Activated T-helper 2 cell treated with anti-CD3 and anti-CD28 coated beads, Interferon-gamma antibody, Interleukin-2, Interleukin-4, amounts not matched to agents 10 μg/mL and 5 μg/mL and 100 μg/mL, durations not matched to agents 14 hours and 24 hours and 36 hours (primary cell): ENCODE measurements at regions of chr2 and their contacts with region 1.

Region 1: GRCh38 chr2:11743846-11744553 is 2.4 kb upstream of the LPIN1 start:
- DNase-seq: peak; percentile 69
- H3K4me3 Mint-ChIP-seq: peak overlapping the region; percentile 22
- H3K27ac Mint-ChIP-seq: peak overlapping the region; percentile 70
- H3K4me1 Mint-ChIP-seq: peaks cover 56% of the 10 kb centered on the region
- H3K27me3 Mint-ChIP-seq: no peaks in the 10 kb centered on the region

Region 2: DNA sequence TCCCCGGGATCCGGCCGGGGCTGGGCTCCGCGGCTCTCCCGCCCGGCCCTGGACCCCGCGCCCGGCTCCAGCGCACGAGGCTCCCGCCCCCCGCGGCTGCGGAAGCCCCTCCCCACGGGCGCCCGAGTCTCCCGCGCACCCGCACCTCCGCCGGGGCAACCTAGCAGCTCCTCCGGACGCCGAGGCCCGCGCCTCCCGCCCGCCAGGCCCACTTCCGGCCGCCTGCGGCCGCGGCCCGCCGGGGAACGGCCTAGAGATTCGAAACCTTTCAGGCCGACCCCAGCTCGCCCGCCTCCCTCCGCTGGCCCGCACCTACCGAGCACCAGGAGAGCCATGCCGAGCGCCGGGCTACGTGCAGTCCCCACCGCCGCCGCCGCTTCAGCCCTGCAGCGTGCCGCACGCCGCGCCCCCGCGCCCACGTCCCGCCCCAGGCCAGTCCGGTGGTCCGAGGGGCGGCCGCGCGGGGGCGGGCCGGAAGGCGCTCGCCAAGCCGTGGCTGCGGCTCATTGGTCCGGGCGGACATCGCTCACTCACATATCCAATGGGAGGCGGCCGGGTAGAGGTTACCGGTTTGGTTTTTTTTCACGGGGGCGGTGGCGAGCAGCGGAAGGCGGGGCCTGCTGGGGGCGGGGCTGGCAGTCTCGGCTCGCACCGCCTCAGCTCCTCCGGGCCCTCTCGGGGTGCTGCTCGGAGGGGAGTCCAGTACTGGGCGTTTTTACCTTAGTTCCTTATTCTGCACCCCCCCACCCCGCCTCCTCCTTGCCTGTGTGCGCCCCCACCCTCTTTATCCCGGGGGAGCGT is 931.4 kb before region 1 on chr2 and contains the start of gene PDIA6:
- intact Hi-C with region 1: loop called (anchors 10 kb)
- DNase-seq: peak; percentile 95
- H3K4me3 Mint-ChIP-seq: peak within 1 kb of the TSS; percentile 89
- H3K27ac Mint-ChIP-seq: peak within 1 kb of the TSS; percentile 92
- H3K4me1 Mint-ChIP-seq: peaks cover 33% of the 10 kb centered on the region
- H3K27me3 Mint-ChIP-seq: peaks cover 18% of the 10 kb centered on the region
- total RNA-seq, gene PDIA6: 210 and 211 TPM in 2 replicates

Region 3: GRCh38 chr2:11154923-11155380 is 589.0 kb before region 1 on chr2:
- intact Hi-C with region 1: loop called (anchors 1 kb)
- DNase-seq: peak; percentile 94
- H3K4me3 Mint-ChIP-seq: peak overlapping the region; percentile 83
- H3K27ac Mint-ChIP-seq: peak overlapping the region; percentile 75
- H3K4me1 Mint-ChIP-seq: peaks cover 9% of the 10 kb centered on the region
- H3K27me3 Mint-ChIP-seq: peaks cover 13% of the 10 kb centered on the region

Region 4: DNA sequence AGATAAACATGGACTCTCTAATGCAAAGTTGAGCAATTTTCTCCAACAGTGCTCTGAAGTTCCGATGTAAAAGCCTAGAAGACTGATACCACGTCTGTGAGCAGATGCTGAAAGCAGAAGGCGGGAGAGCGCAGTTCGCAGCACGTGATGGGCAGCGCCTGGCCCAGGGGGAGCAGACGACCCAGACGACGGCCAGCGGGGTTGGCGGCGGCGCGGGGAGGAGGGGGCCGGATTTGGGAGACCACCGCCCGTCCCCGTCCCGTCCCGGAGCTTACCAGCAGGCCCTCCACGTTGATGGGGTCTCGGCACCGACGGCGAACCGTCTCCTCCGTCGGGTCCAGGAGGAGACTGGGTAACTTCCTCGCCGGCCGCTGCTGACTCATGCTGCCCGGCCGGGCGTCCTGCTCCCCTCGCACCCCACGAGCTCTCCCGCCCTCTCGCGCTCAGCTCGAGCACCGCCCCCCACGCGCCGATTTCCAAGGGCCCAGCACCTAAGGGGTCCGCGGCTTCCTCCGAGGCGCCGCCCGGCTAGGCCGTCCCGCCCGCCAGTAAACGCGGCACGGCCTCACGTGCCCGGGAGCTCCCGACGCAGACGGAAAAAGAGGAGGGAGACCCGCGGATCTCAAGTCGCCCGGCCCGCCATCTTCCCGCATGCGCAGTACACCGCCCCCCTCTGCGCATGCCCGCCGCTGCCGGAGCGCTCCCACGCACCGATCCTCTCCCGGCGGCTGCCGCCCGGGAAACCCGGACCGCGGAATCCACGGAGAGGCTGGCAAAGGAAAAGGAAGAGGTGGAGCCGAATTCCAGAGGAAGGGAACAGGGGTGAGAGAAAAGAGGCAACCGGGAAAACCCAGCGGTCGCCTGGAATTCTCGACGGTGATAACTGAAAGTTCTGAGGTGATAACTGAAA is 278.2 kb before region 1 on chr2 and contains the start of gene E2F6:
- intact Hi-C with region 1: loop called (anchors 10 kb)
- DNase-seq: peak; percentile 80
- H3K4me3 Mint-ChIP-seq: peak within 1 kb of the TSS; percentile 96
- H3K27ac Mint-ChIP-seq: peak within 1 kb of the TSS; percentile 86
- H3K4me1 Mint-ChIP-seq: peaks cover 20% of the 10 kb centered on the region
- H3K27me3 Mint-ChIP-seq: no peaks in the 10 kb centered on the region
- total RNA-seq, gene E2F6: 16.8 and 18.2 TPM in 2 replicates

Region 5: DNA sequence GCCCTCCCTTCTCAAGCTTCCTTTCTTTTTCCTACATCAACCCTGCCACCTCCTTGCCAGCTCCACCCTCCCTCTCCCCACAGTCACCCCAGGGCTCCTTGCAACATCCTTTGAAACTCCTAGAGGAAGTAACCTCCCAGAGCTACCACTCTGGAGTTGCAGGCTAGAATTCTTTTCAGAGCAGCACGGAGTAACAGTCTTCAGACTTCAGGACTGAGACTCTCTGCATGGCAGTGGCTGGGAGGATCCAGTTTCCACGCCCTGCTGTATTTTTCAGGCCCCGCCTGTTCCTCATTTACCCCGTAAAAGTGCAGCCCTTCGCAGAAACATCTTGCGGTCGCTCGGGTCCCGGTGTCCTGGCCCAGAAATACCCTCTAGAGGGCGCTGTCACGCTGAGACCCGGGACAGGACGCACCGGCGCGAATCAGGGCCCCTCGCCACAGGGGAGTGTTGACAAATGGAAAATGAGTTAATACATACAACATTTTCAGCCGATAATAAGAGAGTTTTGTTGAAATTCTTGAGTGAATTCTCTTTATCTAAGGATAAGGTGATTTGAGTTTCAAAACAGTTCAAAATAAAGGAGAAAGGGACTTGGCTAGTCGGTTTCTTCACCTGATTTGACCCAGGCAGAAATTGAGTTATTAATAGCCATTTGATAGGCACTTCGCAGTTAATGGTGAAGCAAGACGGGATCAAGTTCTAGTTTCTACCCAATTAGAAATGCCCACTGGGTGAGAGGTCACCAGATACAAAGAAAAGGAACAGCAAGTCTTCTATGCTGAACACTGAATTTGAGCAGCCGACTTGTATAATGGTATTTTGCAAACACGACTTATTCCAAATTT is 55.6 kb before region 1 on chr2:
- intact Hi-C with region 1: loop called (anchors 1 kb)
- DNase-seq: peak; percentile 82
- H3K4me3 Mint-ChIP-seq: peak overlapping the region; percentile 51
- H3K27ac Mint-ChIP-seq: peak overlapping the region; percentile 59
- H3K4me1 Mint-ChIP-seq: peaks cover 16% of the 10 kb centered on the region
- H3K27me3 Mint-ChIP-seq: peaks cover 13% of the 10 kb centered on the region

Region 6: GRCh38 chr2:11753886-11754699 is 10.1 kb after region 1 on chr2:
- intact Hi-C with region 1: loop called (anchors 1 kb)
- DNase-seq: peak; percentile 52
- H3K4me3 Mint-ChIP-seq: peak overlapping the region; percentile 74
- H3K27ac Mint-ChIP-seq: peak overlapping the region; percentile 93
- H3K4me1 Mint-ChIP-seq: peaks cover 75% of the 10 kb centered on the region
- H3K27me3 Mint-ChIP-seq: no peaks in the 10 kb centered on the region